ENCODE measurements at regions of chr16 and their contacts with region 1.

Region 1: DNA sequence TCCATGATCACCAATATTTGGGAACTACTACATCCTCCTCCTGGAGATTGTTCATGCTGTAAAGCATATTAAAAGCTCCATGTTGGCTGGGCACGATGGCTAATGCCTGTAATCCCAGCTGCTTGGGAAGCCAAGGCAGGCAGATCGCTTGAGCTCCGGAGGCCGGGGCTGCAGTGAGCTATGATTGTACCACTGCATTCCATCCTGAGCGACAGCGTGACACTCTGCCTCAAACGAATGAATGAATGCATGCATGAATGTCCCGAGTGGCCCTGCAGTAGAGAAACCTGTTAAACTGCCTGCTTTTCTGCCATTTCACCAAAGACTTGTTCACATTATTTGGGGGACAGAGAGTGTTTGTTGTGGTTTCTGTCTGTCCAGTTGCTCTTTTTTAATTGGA is 15.0 kb downstream of the CNEP1R1 start:
- DNase-seq: no peak
- H3K4me3 ChIP-seq: no peak overlapping the region
- H3K27ac ChIP-seq: no peak overlapping the region
- H3K4me1 ChIP-seq: no peaks in the 10 kb centered on the region
- H3K27me3 ChIP-seq: no peaks in the 10 kb centered on the region
- CTCF ChIP-seq: no peak
- POLR2A ChIP-seq: no peak

Region 2: GRCh38 chr16:48499923-48500381 is 1540.1 kb before region 1 on chr16:
- intact Hi-C with region 1: loop called (anchors 10 kb)
- DNase-seq: peak in 1 of 2 donors; percentile 67
- H3K4me3 ChIP-seq: no peak overlapping the region
- H3K27ac ChIP-seq: peak overlapping the region; percentile 74 to 84
- H3K4me1 ChIP-seq: peaks cover 5 to 8% of the 10 kb centered on the region in 2 donors
- H3K27me3 ChIP-seq: no peaks in the 10 kb centered on the region
- CTCF ChIP-seq: no peak
- POLR2A ChIP-seq: no peak